Upper lobe of right lung (tissue), 1 donor: ENCODE measurements at regions of chr5 and their contacts with region 1.

Region 1: GRCh38 chr5:149141224-149141956 is at the start of gene ABLIM3:
- DNase-seq: peak; percentile 88
- ATAC-seq: peak; percentile 98
- H3K4me3 ChIP-seq: peak within 1 kb of the TSS; percentile 79
- H3K27ac ChIP-seq: peak within 1 kb of the TSS; percentile 75
- H3K4me1 ChIP-seq: peaks cover 15% of the 10 kb centered on the region
- H3K27me3 ChIP-seq: no peaks in the 10 kb centered on the region
- CTCF ChIP-seq: peak; percentile 97
- total RNA-seq, gene ABLIM3: 31.9 TPM

Region 2: DNA sequence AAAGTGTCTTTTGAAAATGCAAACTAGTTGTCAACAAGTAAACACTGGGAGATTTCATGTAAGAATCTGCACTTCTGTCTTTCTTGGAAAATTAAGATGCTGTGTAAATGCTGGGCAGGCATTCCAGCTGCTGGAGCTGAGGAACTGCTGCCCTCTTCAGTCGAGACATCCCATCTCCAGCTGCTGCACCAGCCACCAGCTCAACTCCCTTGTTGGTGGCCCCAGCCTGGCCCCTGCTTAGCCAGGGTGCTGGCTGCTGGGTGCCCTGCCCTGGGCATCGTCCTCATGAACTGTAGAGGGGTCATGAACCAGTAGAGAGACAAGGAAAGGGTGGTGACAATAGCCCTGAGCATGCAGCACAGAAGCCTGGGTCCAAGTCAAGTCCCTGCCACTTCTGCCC is 97.2 kb after region 1 on chr5:
- intact Hi-C with region 1: loop called (anchors 10 kb)
- DNase-seq: no peak
- ATAC-seq: no peak
- H3K4me3 ChIP-seq: no peak overlapping the region
- H3K27ac ChIP-seq: no peak overlapping the region
- H3K4me1 ChIP-seq: no peaks in the 10 kb centered on the region
- H3K27me3 ChIP-seq: no peaks in the 10 kb centered on the region
- CTCF ChIP-seq: no peak